Common myeloid progenitor, CD34-positive (primary cell): ENCODE measurements at regions of chr12 and their contacts with region 1.

Region 1: DNA sequence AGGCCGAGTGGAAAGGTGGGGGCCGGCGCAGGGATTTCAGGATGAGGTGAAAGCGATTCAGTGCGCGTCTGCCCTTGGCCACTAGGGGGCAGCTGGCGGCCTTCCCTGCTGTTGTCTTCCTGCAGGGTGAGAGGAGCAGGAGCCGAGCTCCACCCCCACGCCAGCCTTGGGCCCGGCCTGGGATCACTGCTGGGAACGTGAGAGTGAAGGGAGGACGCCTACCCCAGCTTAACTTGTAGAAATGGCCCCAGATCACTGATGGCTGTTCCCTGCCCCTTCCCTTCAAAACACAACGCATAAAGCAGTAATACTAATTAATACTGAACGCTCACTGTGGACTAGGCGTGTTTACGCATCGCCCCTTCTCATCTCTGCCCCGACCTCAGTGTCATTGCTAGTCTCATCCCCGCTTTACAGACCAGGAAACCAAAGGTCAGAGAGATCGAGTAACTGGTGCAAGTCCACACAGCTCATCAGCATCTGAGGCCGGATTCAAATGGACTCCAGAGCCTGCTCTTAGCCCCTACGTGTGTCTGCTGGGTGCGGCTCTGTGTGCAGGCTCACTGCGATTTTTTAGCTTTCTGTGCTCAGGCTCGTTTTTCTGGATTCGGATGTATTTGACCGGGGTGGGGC is 24.3 kb downstream of the MVK start:
- DNase-seq: peak; percentile 48 to 56 (median 51)
- H3K4me3 ChIP-seq: no peak overlapping the region
- H3K27ac ChIP-seq: no peak overlapping the region
- H3K4me1 ChIP-seq: peaks cover 2 to 20% (median 13%) of the 10 kb centered on the region in 4 experiments
- H3K27me3 ChIP-seq: peaks cover 0 to 4% (median 0%) of the 10 kb centered on the region in 5 experiments

Region 2: GRCh38 chr12:109512608-109513007 is 85.3 kb before region 1 on chr12:
- CTCF ChIA-PET with region 1: no interaction called
- POLR2A ChIA-PET with region 1: no interaction called
- DNase-seq: no peak
- H3K4me3 ChIP-seq: no peak overlapping the region
- H3K27ac ChIP-seq: no peak overlapping the region
- H3K4me1 ChIP-seq: no peaks in the 10 kb centered on the region
- H3K27me3 ChIP-seq: no peaks in the 10 kb centered on the region

Region 3: DNA sequence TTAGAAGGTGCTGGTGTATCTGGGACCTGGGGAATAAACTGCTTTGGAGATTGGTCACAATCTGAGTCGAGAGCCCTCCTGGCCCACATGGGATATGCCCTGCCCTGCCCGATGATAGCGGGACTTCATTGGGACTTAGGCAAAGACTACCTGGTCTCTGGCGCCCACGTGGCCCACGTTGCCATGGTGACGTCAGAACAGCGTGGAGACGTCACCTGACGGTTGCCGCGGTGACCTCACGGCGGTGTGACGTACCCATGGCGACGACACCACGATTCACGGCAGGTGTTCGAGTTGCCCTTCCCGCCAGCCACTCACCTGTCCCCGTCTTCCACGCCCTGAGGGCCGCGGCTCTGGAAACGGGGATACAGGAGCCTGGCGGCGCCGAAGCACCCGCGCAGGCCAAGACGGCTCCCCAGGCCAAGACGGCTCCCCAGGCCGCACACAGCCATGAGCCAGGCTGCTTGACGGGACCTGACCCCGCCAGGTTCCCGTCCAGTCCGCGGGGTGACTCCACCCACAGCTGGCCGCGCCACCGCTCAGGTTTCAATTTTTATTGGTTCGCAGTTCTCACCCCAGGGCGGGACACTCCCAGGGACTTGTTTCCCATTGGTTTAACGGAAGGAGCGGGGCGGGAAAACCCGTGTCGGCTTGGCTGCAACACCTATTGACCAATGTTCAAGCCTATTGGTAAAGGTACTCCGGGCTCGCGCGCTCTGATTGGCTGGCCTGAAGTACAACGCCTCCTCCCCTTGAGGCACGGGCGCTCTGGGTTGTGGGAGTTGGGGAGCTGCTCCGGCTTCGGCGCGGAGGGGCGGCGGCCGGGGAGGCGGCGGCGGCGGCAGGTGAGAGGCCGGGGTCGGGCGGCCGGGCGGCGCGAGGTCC is 24.6 kb before region 1 on chr12 and contains the starts of genes MMAB and MVK:
- CTCF ChIA-PET with region 1: interaction called, 14 read pairs
- POLR2A ChIA-PET with region 1: no interaction called
- DNase-seq: peak; percentile 99
- H3K4me3 ChIP-seq: peak within 1 kb of the TSS; percentile 67 to 91 (median 81)
- H3K27ac ChIP-seq: peak within 1 kb of the TSS; percentile 78 to 93
- H3K4me1 ChIP-seq: peaks cover 7 to 30% (median 15%) of the 10 kb centered on the region in 4 experiments
- H3K27me3 ChIP-seq: no peaks in the 10 kb centered on the region

Region 4: GRCh38 chr12:109586385-109587296 is 11.3 kb before region 1 on chr12:
- CTCF ChIA-PET with region 1: interaction called, 39 read pairs
- POLR2A ChIA-PET with region 1: no interaction called
- DNase-seq: no peak
- H3K4me3 ChIP-seq: no peak overlapping the region
- H3K27ac ChIP-seq: no peak overlapping the region
- H3K4me1 ChIP-seq: no peaks in the 10 kb centered on the region
- H3K27me3 ChIP-seq: no peaks in the 10 kb centered on the region

Region 5: GRCh38 chr12:109680264-109681005 is 82.5 kb after region 1 on chr12:
- CTCF ChIA-PET with region 1: no interaction called
- POLR2A ChIA-PET with region 1: no interaction called
- DNase-seq: no peak
- H3K4me3 ChIP-seq: no peak overlapping the region
- H3K27ac ChIP-seq: no peak overlapping the region
- H3K4me1 ChIP-seq: no peaks in the 10 kb centered on the region
- H3K27me3 ChIP-seq: peaks cover 0 to 29% (median 17%) of the 10 kb centered on the region in 5 experiments

Region 6: DNA sequence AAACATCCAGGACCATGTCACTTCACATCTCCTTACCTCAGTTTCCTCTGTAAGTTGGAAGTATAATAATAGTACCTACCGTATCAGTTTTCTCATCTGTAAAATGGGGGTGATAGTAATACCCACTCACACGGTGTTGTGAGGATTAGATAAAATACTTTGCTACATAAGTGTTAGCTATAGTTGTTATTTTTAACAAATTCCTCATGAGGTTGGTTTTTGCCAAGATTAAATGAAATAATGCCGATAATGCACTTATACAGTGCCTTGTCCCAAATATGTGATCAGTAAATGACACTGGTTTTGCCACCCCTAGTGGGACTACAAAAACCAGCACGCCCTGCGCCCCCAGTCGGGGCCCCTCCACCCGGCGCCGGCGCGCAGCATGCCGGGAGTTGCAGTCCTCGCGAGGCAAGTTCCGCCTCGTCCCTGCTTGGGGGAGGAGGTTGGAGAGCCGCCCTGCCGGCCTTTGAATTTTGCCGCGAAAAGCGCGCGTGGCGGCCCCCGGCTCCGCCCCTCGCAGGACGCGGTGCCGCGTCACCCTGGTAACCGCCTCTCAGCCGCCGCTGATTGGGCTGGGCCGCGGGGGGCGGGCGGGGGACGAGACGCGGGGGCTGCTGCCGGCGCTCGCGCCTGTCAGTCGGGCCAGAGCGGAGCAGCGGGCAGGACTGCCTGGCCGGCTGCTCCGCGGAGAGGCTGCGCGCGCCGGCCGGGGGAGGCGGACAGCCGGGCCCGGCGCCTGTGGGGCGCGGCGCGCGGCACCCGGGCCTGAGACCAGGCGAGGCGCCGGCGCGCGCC is 115.5 kb after region 1 on chr12 and contains the start of gene FAM222A:
- CTCF ChIA-PET with region 1: interaction called, 11 read pairs
- POLR2A ChIA-PET with region 1: no interaction called
- DNase-seq: peak; percentile 96 to 98 (median 98)
- H3K4me3 ChIP-seq: peak within 1 kb of the TSS; percentile 46 to 73 (median 64)
- H3K27ac ChIP-seq: no peak within 1 kb of the TSS
- H3K4me1 ChIP-seq: peaks cover 0 to 8% (median 6%) of the 10 kb centered on the region in 4 experiments
- H3K27me3 ChIP-seq: peaks cover 0 to 66% (median 30%) of the 10 kb centered on the region in 5 experiments

Region 7: DNA sequence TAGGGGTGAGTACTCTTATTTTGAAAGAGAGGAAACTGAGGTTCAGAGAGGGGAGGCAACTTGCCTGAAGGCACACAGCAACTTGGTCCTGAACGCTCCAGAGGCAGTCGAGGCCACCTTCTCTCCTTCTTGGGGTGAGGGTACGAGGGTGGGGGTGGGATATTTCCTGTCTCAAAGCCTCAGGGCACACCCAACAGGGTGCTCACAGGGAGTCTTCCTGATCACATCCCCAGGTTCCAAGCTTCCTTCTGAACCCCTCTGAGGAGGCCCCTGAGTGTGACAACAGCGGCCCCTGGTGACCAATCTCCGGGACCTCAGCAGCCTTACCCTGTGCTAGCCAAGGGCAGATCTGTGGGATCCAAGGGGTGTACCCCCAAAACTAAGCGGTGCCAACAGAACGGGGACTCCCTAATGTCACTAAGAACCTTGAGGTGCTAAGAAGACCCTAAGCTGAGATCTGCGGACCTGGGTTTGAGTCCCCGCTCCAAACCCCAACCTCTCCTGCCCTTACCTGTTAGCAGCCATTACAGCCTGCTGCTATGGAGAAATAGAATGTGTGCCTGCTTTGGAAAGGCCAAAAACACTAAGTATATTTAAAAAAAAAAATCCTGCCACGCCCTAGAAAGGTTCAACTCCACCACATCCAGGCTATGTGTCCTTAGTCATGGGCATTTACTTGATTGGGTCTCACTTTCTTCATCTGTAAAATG is 177.4 kb after region 1 on chr12:
- CTCF ChIA-PET with region 1: interaction called, 85 read pairs
- POLR2A ChIA-PET with region 1: no interaction called
- DNase-seq: peak; percentile 64 to 81 (median 76)
- H3K4me3 ChIP-seq: no peak overlapping the region
- H3K27ac ChIP-seq: no peak overlapping the region
- H3K4me1 ChIP-seq: peaks cover 0 to 9% (median 4%) of the 10 kb centered on the region in 4 experiments
- H3K27me3 ChIP-seq: no peaks in the 10 kb centered on the region